Stomach (tissue), 19 donors: ENCODE measurements at regions of chr18 and their contacts with region 1.

Region 1: DNA sequence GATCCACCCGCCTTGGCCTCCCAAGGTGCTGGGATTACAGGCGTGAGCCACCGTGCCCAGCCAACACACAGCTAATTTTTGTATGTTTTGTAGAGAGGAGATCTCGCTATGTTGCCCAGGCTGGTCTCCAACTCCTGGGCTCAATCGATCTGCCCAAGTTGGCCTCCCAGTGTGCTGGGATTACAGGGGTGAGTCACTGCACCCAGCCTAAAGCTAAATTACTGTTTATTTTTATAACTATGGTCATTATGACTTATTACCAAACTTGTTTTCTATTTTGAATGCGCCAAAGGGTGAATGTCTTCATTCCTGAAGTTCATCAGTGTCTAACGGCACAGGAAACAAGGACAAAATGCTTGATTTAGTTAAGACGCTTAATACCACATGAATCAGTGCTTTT is 38.9 kb upstream of the GREB1L start:
- DNase-seq: no peak
- H3K4me3 ChIP-seq: no peak overlapping the region
- H3K27ac ChIP-seq: no peak overlapping the region
- H3K4me1 ChIP-seq: no peaks in the 10 kb centered on the region
- H3K27me3 ChIP-seq: peaks cover 0 to 34% (median 5%) of the 10 kb centered on the region in 3 donors
- CTCF ChIP-seq: no peak
- EP300 ChIP-seq: no peak
- POLR2A ChIP-seq: no peak

Region 2: GRCh38 chr18:21444465-21445023 is 241.4 kb after region 1 on chr18:
- intact Hi-C with region 1: loop called (anchors 5 kb)
- DNase-seq: peak in 1 of 2 donors; percentile 77
- H3K4me3 ChIP-seq: no peak overlapping the region
- H3K27ac ChIP-seq: no peak overlapping the region
- H3K4me1 ChIP-seq: no peaks in the 10 kb centered on the region
- H3K27me3 ChIP-seq: no peaks in the 10 kb centered on the region
- CTCF ChIP-seq: peak in 5 of 7 experiments; percentile 18 to 64 (median 55)
- EP300 ChIP-seq: no peak
- POLR2A ChIP-seq: no peak

Region 3: GRCh38 chr18:21557607-21558253 is 354.6 kb after region 1 on chr18:
- intact Hi-C with region 1: no loop called
- DNase-seq: peak in 1 of 2 donors; percentile 14
- H3K4me3 ChIP-seq: no peak overlapping the region
- H3K27ac ChIP-seq: peak overlapping the region in 2 of 5 donors; percentile 12 to 38
- H3K4me1 ChIP-seq: peaks cover 0 to 4% (median 2%) of the 10 kb centered on the region in 4 donors
- H3K27me3 ChIP-seq: no peaks in the 10 kb centered on the region
- CTCF ChIP-seq: no peak
- EP300 ChIP-seq: no peak
- POLR2A ChIP-seq: no peak

Region 4: DNA sequence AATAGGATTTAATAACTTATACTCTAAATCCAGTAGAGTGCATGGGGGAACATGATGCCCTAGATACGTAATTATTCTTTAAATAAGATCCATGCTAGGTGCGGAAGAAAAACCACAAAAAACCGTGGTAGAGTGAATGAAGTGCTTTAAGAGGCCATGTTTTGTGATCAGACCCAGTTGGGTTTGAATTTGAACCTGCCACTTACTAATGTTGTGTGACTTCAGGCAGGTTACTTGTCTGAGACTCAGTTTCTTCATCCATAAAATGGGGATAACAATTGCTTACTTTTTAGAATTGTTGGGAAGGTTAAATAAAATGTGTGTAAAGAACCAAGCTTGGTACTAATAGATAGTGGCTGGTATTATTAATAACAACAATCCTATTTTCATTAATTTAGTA is 554.7 kb after region 1 on chr18:
- intact Hi-C with region 1: no loop called
- DNase-seq: no peak
- H3K4me3 ChIP-seq: no peak overlapping the region
- H3K27ac ChIP-seq: no peak overlapping the region
- H3K4me1 ChIP-seq: peaks cover 0 to 53% (median 28%) of the 10 kb centered on the region in 4 donors
- H3K27me3 ChIP-seq: no peaks in the 10 kb centered on the region
- CTCF ChIP-seq: no peak
- EP300 ChIP-seq: no peak
- POLR2A ChIP-seq: no peak